Activated T-helper 2 cell treated with anti-CD3 and anti-CD28 coated beads, Interferon-gamma antibody, Interleukin-2, Interleukin-4, amounts not matched to agents 10 μg/mL and 5 μg/mL and 100 μg/mL, durations not matched to agents 14 hours and 24 hours and 36 hours (primary cell): ENCODE measurements at regions of chrX and their contacts with region 1.

Region 1: DNA sequence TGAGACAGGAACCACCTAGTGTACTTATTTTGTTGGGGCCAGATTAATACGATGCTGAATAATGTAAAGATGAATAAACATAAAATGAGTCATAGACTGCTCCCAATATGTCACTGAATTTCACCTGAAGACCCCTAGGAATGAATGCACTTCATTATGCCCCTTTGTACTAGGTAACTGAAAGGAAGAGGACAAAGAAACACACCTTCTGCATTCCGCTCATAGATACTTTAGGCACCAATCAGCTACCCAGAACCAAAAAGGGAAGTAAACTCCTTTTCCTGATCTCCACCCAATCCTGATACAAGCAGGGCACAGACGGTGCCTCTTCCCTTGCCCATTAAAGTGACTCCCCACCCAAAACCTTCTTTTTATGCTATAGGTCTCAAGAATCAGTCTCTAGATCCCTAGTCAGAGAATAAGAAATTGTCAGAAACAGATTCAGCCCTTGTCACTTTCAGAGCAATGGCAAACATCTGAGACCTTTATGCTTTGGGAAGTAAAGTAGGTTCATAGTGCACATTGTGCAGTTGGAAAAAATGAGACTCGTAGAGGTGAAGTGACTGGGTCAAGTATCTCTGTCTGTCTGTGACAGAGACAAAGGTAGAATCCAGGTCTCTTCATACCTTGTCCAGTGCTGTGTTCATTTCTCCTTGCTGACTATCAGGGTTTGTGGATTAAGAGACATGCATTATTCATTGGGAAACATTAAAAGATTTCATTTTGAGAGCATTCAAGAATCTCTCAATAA is 2.3 kb downstream of the GPR174 start:
- DNase-seq: no peak
- H3K4me3 Mint-ChIP-seq: peak overlapping the region; percentile 92
- H3K27ac Mint-ChIP-seq: peak overlapping the region; percentile 89
- H3K4me1 Mint-ChIP-seq: peaks cover 48% of the 10 kb centered on the region
- H3K27me3 Mint-ChIP-seq: no peaks in the 10 kb centered on the region

Region 2: GRCh38 chrX:78321809-78322208 is 825.0 kb before region 1 on chrX:
- intact Hi-C with region 1: loop called (anchors 5 kb)
- DNase-seq: peak; percentile 38
- H3K4me3 Mint-ChIP-seq: peak overlapping the region; percentile 33
- H3K27ac Mint-ChIP-seq: peak overlapping the region; percentile 89
- H3K4me1 Mint-ChIP-seq: peaks cover 30% of the 10 kb centered on the region
- H3K27me3 Mint-ChIP-seq: no peaks in the 10 kb centered on the region

Region 3: GRCh38 chrX:79096145-79096556 is 50.7 kb before region 1 on chrX:
- intact Hi-C with region 1: loop called (anchors 2 kb)
- DNase-seq: no peak
- H3K4me3 Mint-ChIP-seq: peak overlapping the region; percentile 42
- H3K27ac Mint-ChIP-seq: peak overlapping the region; percentile 93
- H3K4me1 Mint-ChIP-seq: peaks cover 48% of the 10 kb centered on the region
- H3K27me3 Mint-ChIP-seq: no peaks in the 10 kb centered on the region

Region 4: GRCh38 chrX:79107891-79108718 is 38.7 kb before region 1 on chrX:
- intact Hi-C with region 1: loop called (anchors 2 kb)
- DNase-seq: no peak
- H3K4me3 Mint-ChIP-seq: no peak overlapping the region
- H3K27ac Mint-ChIP-seq: peak overlapping the region; percentile 93
- H3K4me1 Mint-ChIP-seq: peaks cover 27% of the 10 kb centered on the region
- H3K27me3 Mint-ChIP-seq: no peaks in the 10 kb centered on the region

Region 5: DNA sequence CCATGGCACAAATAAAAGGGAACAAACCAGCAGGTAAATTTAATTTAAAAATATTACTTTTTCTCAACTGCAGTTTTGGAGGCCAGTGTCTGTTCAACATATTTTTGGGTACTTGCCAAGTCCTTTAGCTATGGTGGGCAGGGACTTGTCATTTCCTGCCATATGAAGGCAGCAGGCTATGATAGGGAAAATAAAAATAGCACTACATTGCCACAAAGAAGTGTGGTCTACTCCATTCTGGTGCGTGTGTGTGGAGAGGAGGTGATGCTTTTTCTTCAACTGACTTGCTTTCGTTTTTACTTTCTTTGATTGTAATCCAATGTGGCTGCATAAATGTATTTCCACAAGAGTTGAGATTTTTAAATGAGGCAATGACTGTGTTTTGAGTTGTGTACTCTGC is 14.8 kb after region 1 on chrX:
- intact Hi-C with region 1: loop called (anchors 2 kb)
- DNase-seq: peak; percentile 43
- H3K4me3 Mint-ChIP-seq: peak overlapping the region; percentile 89
- H3K27ac Mint-ChIP-seq: peak overlapping the region; percentile 99
- H3K4me1 Mint-ChIP-seq: peaks cover 54% of the 10 kb centered on the region
- H3K27me3 Mint-ChIP-seq: no peaks in the 10 kb centered on the region

Region 6: GRCh38 chrX:79182616-79183015 is 35.8 kb after region 1 on chrX:
- intact Hi-C with region 1: loop called (anchors 5 kb)
- DNase-seq: no peak
- H3K4me3 Mint-ChIP-seq: peak overlapping the region; percentile 0
- H3K27ac Mint-ChIP-seq: peak overlapping the region; percentile 91
- H3K4me1 Mint-ChIP-seq: peaks cover 38% of the 10 kb centered on the region
- H3K27me3 Mint-ChIP-seq: no peaks in the 10 kb centered on the region

Region 7: DNA sequence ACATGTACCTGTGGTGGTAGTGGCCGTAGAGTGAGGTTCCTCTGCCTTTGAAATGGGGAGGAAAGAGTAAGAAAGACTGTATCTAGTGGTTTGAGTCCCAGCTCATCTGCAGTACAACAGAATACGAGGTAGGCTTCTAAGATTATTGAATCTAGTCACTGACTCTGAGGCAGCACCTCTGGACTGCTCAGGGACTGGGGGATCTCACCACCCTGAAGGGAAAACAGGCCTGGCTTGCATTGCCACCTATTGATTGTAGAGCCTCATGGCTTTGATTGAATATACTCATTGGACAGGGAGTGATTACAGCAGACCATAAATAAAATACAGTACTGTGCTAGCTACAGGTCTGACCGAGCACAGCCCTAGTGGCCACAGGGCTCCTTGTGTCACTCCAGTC is 48.2 kb after region 1 on chrX:
- intact Hi-C with region 1: no loop called
- DNase-seq: no peak
- H3K4me3 Mint-ChIP-seq: no peak overlapping the region
- H3K27ac Mint-ChIP-seq: no peak overlapping the region
- H3K4me1 Mint-ChIP-seq: no peaks in the 10 kb centered on the region
- H3K27me3 Mint-ChIP-seq: no peaks in the 10 kb centered on the region

Region 8: DNA sequence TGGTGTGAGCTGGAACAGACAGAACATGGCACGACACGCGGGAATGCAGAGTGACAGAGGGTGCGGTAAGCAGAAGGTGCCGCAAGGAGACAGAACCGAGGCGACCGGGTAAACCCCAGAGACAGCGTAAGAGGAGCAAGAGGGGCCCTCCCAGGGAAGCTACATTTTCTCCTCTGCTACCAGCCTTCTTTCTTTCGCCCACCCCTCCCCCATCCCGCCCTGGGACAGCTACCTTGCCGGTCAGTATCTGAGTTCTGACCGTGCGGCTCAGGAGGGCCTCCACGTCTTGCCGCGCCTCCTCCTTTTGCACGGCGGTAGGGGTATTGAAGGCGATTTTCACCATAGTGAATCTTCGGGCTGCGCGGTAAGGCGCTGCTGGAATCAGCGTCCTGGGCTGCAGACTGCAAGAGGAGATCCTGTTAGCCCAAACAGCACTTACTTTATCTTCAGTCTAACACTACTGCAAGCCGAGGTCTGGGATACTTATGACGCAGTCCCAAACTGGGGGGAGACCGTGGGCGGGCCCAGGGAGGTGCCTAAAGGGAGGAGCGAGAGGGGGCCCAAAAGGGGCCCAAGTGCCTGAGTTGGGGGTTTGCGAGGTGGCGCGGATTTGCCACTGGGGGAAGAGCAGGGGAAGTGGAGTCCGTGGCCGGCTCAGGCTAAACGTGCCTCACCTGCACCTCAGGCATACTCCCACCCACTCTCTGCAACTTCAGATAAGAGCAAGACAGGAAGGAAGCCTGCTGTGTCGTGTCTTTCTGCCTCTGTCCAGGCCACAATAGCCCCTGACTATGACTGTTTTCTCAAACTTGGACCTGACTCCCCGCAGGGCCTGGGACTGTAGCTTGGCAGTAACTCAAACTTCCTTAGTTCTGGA is 220.3 kb after region 1 on chrX and contains the start of gene ITM2A:
- intact Hi-C with region 1: loop called (anchors 5 kb)
- DNase-seq: peak; percentile 34
- H3K4me3 Mint-ChIP-seq: peak within 1 kb of the TSS; percentile 95
- H3K27ac Mint-ChIP-seq: peak within 1 kb of the TSS; percentile 92
- H3K4me1 Mint-ChIP-seq: peaks cover 33% of the 10 kb centered on the region
- H3K27me3 Mint-ChIP-seq: no peaks in the 10 kb centered on the region
- total RNA-seq, gene ITM2A: 138 and 142 TPM in 2 replicates

Region 9: DNA sequence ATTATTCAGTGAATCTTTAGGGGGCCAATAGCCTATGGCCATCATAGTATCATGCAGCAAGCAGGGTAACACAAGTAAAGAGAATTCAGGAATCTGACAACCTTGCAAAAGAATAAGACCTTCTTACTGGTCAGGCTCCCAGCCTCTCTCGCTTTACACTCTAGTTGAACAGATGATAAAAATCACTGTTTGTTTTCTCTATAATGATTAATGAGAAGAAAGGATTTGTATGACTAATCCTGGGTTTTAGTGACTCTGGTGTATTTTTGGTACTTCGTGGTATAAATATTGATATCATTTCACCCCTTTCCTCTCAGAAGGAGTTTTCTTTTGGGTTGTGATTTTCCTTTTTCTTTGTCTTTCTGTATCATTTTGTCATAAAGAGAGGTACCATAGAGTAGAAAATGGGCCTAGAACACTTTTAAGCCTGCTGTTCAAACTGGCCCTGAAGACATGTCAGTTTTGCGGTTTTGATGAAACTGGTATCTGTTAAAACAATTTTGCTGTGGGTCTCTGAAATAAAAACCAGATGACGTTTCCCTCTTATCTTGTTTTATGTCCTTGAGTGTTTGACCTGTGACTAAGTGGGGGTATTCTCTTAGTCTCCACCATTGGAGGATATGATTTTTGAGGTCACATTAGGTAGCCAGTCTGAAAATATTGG is 572.9 kb after region 1 on chrX:
- intact Hi-C with region 1: no loop called
- DNase-seq: no peak
- H3K4me3 Mint-ChIP-seq: no peak overlapping the region
- H3K27ac Mint-ChIP-seq: no peak overlapping the region
- H3K4me1 Mint-ChIP-seq: no peaks in the 10 kb centered on the region
- H3K27me3 Mint-ChIP-seq: no peaks in the 10 kb centered on the region